Ovary (tissue), 10 donors: ENCODE measurements at regions of chr1 and their contacts with region 1.

Region 1: GRCh38 chr1:162035241-162035640 is 11.6 kb upstream of the OLFML2B start:
- DNase-seq: no peak
- H3K4me3 ChIP-seq: no peak overlapping the region
- H3K27ac ChIP-seq: no peak overlapping the region
- H3K4me1 ChIP-seq: no peaks in the 10 kb centered on the region
- H3K27me3 ChIP-seq: no peaks in the 10 kb centered on the region
- CTCF ChIP-seq: no peak
- EP300 ChIP-seq: no peak
- POLR2A ChIP-seq: no peak

Region 2: GRCh38 chr1:161792740-161793139 is 242.5 kb before region 1 on chr1:
- intact Hi-C with region 1: loop called in 3 of 4 experiments (anchors 5 to 10 kb)
- DNase-seq: no peak
- H3K4me3 ChIP-seq: no peak overlapping the region
- H3K27ac ChIP-seq: no peak overlapping the region
- H3K4me1 ChIP-seq: no peaks in the 10 kb centered on the region
- H3K27me3 ChIP-seq: no peaks in the 10 kb centered on the region
- CTCF ChIP-seq: peak in 2 of 3 donors; percentile 17 to 46
- EP300 ChIP-seq: no peak
- POLR2A ChIP-seq: no peak

Region 3: DNA sequence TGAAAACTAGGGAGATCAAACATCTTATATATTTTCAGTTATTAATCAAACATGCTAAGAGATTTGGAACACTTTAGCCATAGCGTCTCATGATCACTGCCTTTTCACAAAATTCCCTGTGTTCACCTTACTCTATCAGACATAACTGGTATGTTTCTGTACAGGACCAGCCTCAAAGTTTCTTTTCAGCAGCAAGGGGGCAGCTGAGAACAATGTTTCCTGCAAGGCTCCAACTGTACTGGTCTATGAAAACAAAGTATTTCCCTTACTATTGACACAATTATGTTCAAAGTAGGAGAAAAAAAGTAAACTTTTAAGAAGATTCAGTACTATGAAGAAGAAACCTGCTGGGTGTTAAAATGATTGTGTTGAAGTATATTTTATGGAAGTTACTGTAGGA is 170.7 kb before region 1 on chr1:
- intact Hi-C with region 1: loop called in 1 of 4 experiments (anchors 10 kb)
- DNase-seq: no peak
- H3K4me3 ChIP-seq: no peak overlapping the region
- H3K27ac ChIP-seq: no peak overlapping the region
- H3K4me1 ChIP-seq: no peaks in the 10 kb centered on the region
- H3K27me3 ChIP-seq: no peaks in the 10 kb centered on the region
- CTCF ChIP-seq: no peak
- EP300 ChIP-seq: no peak
- POLR2A ChIP-seq: no peak

Region 4: GRCh38 chr1:162303002-162303344 is 267.7 kb after region 1 on chr1:
- intact Hi-C with region 1: no loop called
- DNase-seq: no peak
- H3K4me3 ChIP-seq: no peak overlapping the region
- H3K27ac ChIP-seq: no peak overlapping the region
- H3K4me1 ChIP-seq: no peaks in the 10 kb centered on the region
- H3K27me3 ChIP-seq: no peaks in the 10 kb centered on the region
- CTCF ChIP-seq: no peak
- EP300 ChIP-seq: no peak
- POLR2A ChIP-seq: no peak